Naive thymus-derived CD8-positive, alpha-beta T cell (primary cell): ENCODE measurements at regions of chr6 and their contacts with region 1.

Region 1: GRCh38 chr6:26249957-26250697 is 114.9 kb upstream of the BTN3A2 start:
- DNase-seq: peak; percentile 52 to 90 (median 76)
- ATAC-seq: peak; percentile 74 to 82
- H3K4me3 Mint-ChIP-seq: peak overlapping the region; percentile 82 to 99 (median 95)
- H3K27ac Mint-ChIP-seq: peak overlapping the region; percentile 90 to 99 (median 96)
- H3K4me1 Mint-ChIP-seq: peaks cover 11 to 48% (median 42%) of the 10 kb centered on the region in 4 donors
- H3K27me3 Mint-ChIP-seq: no peaks in the 10 kb centered on the region

Region 2: GRCh38 chr6:26031595-26032339 is 218.4 kb before region 1 on chr6:
- POLR2A ChIA-PET with region 1: interaction called, 14 read pairs
- DNase-seq: peak; percentile 71 to 96 (median 91)
- ATAC-seq: peak; percentile 67 to 71
- H3K4me3 Mint-ChIP-seq: peak overlapping the region; percentile 94 to 97 (median 95)
- H3K27ac Mint-ChIP-seq: peak overlapping the region; percentile 93 to 99 (median 96)
- H3K4me1 Mint-ChIP-seq: peaks cover 11 to 52% (median 41%) of the 10 kb centered on the region in 4 donors
- H3K27me3 Mint-ChIP-seq: peaks cover 0 to 2% (median 0%) of the 10 kb centered on the region in 5 donors

Region 3: GRCh38 chr6:26183581-26184366 is 66.4 kb before region 1 on chr6:
- POLR2A ChIA-PET with region 1: interaction called, 24 read pairs
- DNase-seq: peak; percentile 22 to 82 (median 58)
- ATAC-seq: peak; percentile 92 to 94
- H3K4me3 Mint-ChIP-seq: peak overlapping the region; percentile 93 to 100 (median 98)
- H3K27ac Mint-ChIP-seq: peak overlapping the region; percentile 70 to 98 (median 95)
- H3K4me1 Mint-ChIP-seq: peaks cover 27 to 48% (median 46%) of the 10 kb centered on the region in 4 donors
- H3K27me3 Mint-ChIP-seq: no peaks in the 10 kb centered on the region

Region 4: DNA sequence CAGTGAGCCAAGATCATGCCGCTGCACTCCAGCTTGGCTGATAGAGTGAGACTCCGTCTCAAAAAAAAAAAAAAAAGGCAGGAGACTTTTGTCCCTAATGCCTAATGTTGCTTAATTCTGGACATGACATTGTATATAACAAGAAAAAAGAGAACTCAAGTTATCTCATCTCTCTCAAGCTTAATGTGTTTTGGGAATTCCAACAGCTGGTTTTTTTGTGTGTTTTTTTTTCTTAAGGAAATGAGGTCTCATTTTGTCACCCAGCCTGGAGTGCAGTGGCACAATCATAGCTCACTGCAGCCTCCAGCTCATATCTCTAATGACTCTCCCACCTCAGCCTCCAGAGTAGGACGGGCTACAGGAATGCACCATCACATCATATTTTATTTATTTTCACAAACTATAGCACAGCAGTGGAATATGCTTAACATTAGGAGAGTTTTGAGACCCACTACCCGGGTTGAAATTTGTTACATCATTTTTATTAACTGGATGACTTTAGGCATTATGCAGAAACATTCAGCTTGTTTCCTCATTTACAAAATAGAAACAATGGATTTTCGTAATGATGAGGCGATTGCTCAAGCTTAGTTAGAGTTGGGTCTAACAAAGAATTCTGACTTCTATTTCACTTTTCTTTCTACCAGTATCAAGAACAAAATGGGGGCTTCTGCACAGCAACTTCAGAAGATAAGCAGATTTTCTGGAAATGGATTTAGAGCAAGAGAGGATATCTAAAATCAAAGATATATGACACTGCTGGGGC is 10.8 kb after region 1 on chr6:
- POLR2A ChIA-PET with region 1: interaction called, 12 read pairs
- DNase-seq: no peak
- ATAC-seq: no peak
- H3K4me3 Mint-ChIP-seq: no peak overlapping the region
- H3K27ac Mint-ChIP-seq: peak overlapping the region in 1 of 10 donors; percentile 39
- H3K4me1 Mint-ChIP-seq: peaks cover 0 to 4% (median 1%) of the 10 kb centered on the region in 4 donors
- H3K27me3 Mint-ChIP-seq: no peaks in the 10 kb centered on the region

Region 5: DNA sequence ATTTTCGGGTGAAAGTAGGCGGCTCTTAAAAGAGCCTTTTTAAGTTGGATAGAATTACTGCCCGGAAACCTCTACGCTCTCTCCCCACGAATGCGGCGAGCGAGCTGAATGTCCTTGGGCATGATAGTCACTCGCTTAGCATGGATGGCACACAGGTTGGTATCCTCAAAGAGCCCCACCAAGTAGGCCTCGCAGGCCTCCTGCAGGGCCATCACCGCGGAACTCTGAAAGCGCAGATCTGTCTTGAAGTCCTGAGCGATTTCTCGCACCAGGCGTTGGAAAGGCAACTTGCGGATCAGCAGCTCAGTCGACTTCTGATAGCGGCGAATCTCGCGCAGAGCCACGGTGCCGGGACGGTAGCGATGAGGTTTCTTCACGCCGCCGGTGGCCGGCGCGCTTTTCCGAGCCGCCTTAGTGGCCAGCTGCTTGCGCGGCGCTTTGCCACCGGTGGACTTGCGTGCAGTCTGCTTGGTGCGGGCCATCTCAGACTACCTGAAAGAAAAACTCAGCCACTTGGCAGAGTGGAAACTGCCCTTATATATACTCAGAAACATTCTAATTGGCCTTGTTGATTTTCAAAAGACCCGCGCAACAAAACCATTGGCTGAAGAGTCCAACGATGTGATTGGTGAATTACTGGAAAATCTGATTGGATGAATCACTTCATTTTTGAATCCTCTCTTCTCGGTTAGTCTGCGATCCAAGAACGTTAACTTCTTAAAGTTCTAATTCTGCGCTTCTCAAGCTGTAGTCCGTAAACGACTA is 21.0 kb after region 1 on chr6:
- POLR2A ChIA-PET with region 1: no interaction called
- DNase-seq: peak; percentile 52 to 93 (median 81)
- ATAC-seq: peak; percentile 18 to 39
- H3K4me3 Mint-ChIP-seq: no peak overlapping the region
- H3K27ac Mint-ChIP-seq: peak overlapping the region in 4 of 10 donors; percentile 20 to 97 (median 40)
- H3K4me1 Mint-ChIP-seq: peaks cover 4 to 28% (median 11%) of the 10 kb centered on the region in 4 donors
- H3K27me3 Mint-ChIP-seq: no peaks in the 10 kb centered on the region

Region 6: DNA sequence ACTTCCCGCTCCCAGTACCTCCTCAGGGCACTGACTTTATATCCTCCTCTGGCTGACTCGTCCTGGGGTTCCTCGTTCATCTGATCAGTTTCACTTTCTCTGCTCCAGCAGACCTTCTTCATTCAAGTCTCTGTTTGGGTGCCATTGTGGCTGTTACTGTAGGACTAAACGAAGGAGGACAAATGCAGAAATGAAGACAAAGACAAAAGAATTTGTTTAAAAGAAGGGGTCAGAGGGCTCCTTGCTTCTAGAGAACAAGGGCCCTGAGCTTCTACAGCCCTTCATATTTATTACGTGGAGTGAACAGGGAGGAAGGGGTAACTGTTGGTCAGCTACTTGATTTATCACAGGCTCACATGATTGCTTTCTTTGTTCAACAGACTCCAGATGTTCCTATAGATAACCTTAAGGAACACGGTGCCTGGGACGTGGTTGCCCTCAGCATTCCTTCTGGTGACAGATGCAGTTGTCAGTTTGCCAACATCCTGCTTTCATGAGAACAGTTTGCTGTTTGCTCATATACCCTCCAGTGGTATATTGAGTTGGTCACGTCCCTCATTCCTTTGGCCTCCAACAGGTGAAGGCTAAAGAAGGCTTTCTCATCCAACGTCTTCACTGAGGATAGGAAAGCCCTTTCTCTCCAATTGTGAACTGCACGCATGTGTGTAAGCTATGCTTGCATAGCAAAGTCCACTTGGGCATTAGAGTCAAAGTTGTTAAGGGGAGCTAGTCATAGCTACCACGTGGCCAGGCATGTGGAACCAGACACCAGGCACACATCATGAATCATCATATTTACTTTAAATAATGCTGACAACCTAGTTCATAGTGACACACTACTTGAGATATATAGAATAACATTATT is 45.8 kb after region 1 on chr6:
- POLR2A ChIA-PET with region 1: no interaction called
- DNase-seq: no peak
- ATAC-seq: no peak
- H3K4me3 Mint-ChIP-seq: peak overlapping the region in 5 of 10 donors; percentile 2 to 46 (median 30)
- H3K27ac Mint-ChIP-seq: peak overlapping the region in 1 of 10 donors; percentile 19
- H3K4me1 Mint-ChIP-seq: peaks cover 0 to 6% (median 3%) of the 10 kb centered on the region in 4 donors
- H3K27me3 Mint-ChIP-seq: no peaks in the 10 kb centered on the region

Region 7: GRCh38 chr6:26312501-26313390 is 62.6 kb after region 1 on chr6:
- POLR2A ChIA-PET with region 1: interaction called, 18 read pairs
- DNase-seq: peak; percentile 65 to 94 (median 86)
- ATAC-seq: peak; percentile 71 to 81
- H3K4me3 Mint-ChIP-seq: peak overlapping the region; percentile 92 to 97 (median 94)
- H3K27ac Mint-ChIP-seq: peak overlapping the region; percentile 74 to 100 (median 94)
- H3K4me1 Mint-ChIP-seq: peaks cover 20 to 47% (median 41%) of the 10 kb centered on the region in 4 donors
- H3K27me3 Mint-ChIP-seq: peaks cover 0 to 6% (median 0%) of the 10 kb centered on the region in 5 donors